GM12878 (cell line): ENCODE measurements at regions of chrX and their contacts with region 1.

Region 1: DNA sequence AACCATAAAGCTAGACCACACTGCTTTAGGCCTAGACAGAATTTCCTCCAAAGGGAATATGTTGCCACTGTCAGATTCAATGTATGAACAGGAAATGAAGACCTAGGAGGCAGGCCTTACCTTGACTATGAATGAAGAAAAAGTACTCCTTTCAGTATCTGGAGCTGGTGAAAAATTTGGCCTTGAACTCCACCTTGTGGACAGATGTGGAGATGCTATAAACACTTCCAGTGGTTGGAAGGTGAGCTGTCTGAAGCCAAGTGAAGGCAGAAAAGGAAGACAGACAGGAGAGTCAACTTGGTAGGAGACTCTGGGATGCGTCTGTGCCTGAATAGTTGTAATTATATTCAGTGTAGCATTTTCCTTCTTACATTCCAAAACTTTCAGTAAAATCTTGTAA is 17.2 kb downstream of the SPIN3 start:
- DNase-seq: peak; percentile 56
- ATAC-seq: peak; percentile 98
- H3K4me3 ChIP-seq: no peak overlapping the region
- H3K27ac ChIP-seq: no peak overlapping the region
- H3K4me1 ChIP-seq: no peaks in the 10 kb centered on the region
- H3K27me3 ChIP-seq: no peaks in the 10 kb centered on the region
- CTCF ChIP-seq: peak; percentile 67 to 77 (median 71)
- EP300 ChIP-seq: no peak
- POLR2A ChIP-seq: no peak
- RAD21 ChIP-seq: peak; percentile 90

Region 2: DNA sequence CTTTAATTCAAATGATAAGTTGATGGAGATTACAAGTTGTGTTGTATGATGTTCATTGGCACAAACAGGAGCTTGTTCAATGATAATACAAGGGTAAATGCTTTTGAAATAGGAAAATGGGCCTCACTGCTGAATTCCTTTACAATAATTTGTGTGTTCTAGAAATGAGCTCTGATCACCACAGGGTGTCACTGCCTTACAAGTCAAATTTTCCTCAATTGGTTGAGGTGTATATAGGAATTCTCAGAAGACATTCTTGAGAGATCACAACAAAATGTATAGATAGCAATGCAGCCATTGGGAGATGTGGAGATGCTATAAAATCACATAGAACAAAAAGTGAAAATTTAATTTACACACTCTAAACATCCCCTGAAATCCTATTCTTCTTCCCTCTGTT is 696.4 kb before region 1 on chrX:
- CTCF ChIA-PET with region 1: no interaction called
- POLR2A ChIA-PET with region 1: no interaction called
- RAD21 ChIA-PET with region 1: no interaction called
- SMC1A ChIA-PET with region 1: no interaction called
- in situ Hi-C with region 1: loop called (anchors 25 kb)
- intact Hi-C with region 1: no loop called
- DNase-seq: no peak
- ATAC-seq: no peak
- H3K4me3 ChIP-seq: no peak overlapping the region
- H3K27ac ChIP-seq: no peak overlapping the region
- H3K4me1 ChIP-seq: no peaks in the 10 kb centered on the region
- H3K27me3 ChIP-seq: no peaks in the 10 kb centered on the region
- CTCF ChIP-seq: peak; percentile 15 to 37 (median 19); a peak in 2 of 6 replicates
- EP300 ChIP-seq: no peak
- POLR2A ChIP-seq: no peak
- RAD21 ChIP-seq: peak; percentile 65

Region 3: GRCh38 chrX:56729152-56729850 is 248.9 kb before region 1 on chrX and contains the start of gene NBDY:
- CTCF ChIA-PET with region 1: interaction called, 10 read pairs
- POLR2A ChIA-PET with region 1: no interaction called
- RAD21 ChIA-PET with region 1: interaction called, 9 read pairs
- SMC1A ChIA-PET with region 1: interaction called, 4 read pairs
- in situ Hi-C with region 1: no loop called
- intact Hi-C with region 1: no loop called
- DNase-seq: no peak
- ATAC-seq: peak; percentile 86
- H3K4me3 ChIP-seq: peak within 1 kb of the TSS; percentile 84
- H3K27ac ChIP-seq: peak within 1 kb of the TSS; percentile 74
- H3K4me1 ChIP-seq: no peaks in the 10 kb centered on the region
- H3K27me3 ChIP-seq: no peaks in the 10 kb centered on the region
- CTCF ChIP-seq: no peak
- EP300 ChIP-seq: no peak
- POLR2A ChIP-seq: peak; percentile 59
- RAD21 ChIP-seq: no peak
- polyA plus RNA-seq, gene NBDY: 113 to 115 TPM

Region 4: GRCh38 chrX:56788717-56789122 is 189.5 kb before region 1 on chrX:
- CTCF ChIA-PET with region 1: interaction called, 10 read pairs
- POLR2A ChIA-PET with region 1: no interaction called
- RAD21 ChIA-PET with region 1: interaction called, 10 read pairs
- SMC1A ChIA-PET with region 1: interaction called, 11 read pairs
- in situ Hi-C with region 1: no loop called
- intact Hi-C with region 1: no loop called
- DNase-seq: no peak
- ATAC-seq: peak; percentile 75
- H3K4me3 ChIP-seq: no peak overlapping the region
- H3K27ac ChIP-seq: no peak overlapping the region
- H3K4me1 ChIP-seq: no peaks in the 10 kb centered on the region
- H3K27me3 ChIP-seq: no peaks in the 10 kb centered on the region
- CTCF ChIP-seq: peak; percentile 17 to 69 (median 25); a peak in 4 of 6 replicates
- EP300 ChIP-seq: no peak
- POLR2A ChIP-seq: no peak
- RAD21 ChIP-seq: peak; percentile 27; the same call in 1 of the 2 replicates

Region 5: GRCh38 chrX:56813318-56813837 is 164.8 kb before region 1 on chrX:
- CTCF ChIA-PET with region 1: interaction called, 5 read pairs
- POLR2A ChIA-PET with region 1: no interaction called
- RAD21 ChIA-PET with region 1: interaction called, 7 read pairs
- SMC1A ChIA-PET with region 1: interaction called, 13 read pairs
- in situ Hi-C with region 1: loop called (anchors 5 kb)
- intact Hi-C with region 1: no loop called
- DNase-seq: no peak
- ATAC-seq: peak; percentile 78
- H3K4me3 ChIP-seq: peak overlapping the region; percentile 42; the same call in 1 of the 2 replicates
- H3K27ac ChIP-seq: peak overlapping the region; percentile 76
- H3K4me1 ChIP-seq: peaks cover 8% of the 10 kb centered on the region
- H3K27me3 ChIP-seq: no peaks in the 10 kb centered on the region
- CTCF ChIP-seq: no peak
- EP300 ChIP-seq: no peak
- POLR2A ChIP-seq: no peak
- RAD21 ChIP-seq: no peak

Region 6: GRCh38 chrX:57137501-57137900 is 159.3 kb after region 1 on chrX:
- CTCF ChIA-PET with region 1: no interaction called
- POLR2A ChIA-PET with region 1: no interaction called
- RAD21 ChIA-PET with region 1: no interaction called
- SMC1A ChIA-PET with region 1: no interaction called
- in situ Hi-C with region 1: loop called (anchors 25 kb)
- intact Hi-C with region 1: no loop called
- DNase-seq: no peak
- ATAC-seq: no peak
- H3K4me3 ChIP-seq: no peak overlapping the region
- H3K27ac ChIP-seq: no peak overlapping the region
- H3K4me1 ChIP-seq: no peaks in the 10 kb centered on the region
- H3K27me3 ChIP-seq: no peaks in the 10 kb centered on the region
- CTCF ChIP-seq: no peak
- EP300 ChIP-seq: no peak
- POLR2A ChIP-seq: no peak
- RAD21 ChIP-seq: no peak